ENCODE measurements at regions of chr7 and their contacts with region 1.

Region 1: GRCh38 chr7:3482147-3482964 is 181.3 kb downstream of the SDK1 start:
- DNase-seq: peak; percentile 68
- H3K4me3 Mint-ChIP-seq: no peak overlapping the region
- H3K27ac Mint-ChIP-seq: no peak overlapping the region
- H3K4me1 Mint-ChIP-seq: peaks cover 11% of the 10 kb centered on the region
- H3K27me3 Mint-ChIP-seq: no peaks in the 10 kb centered on the region
- CTCF ChIP-seq: peak; percentile 81

Region 2: GRCh38 chr7:3649250-3649649 is 166.9 kb after region 1 on chr7:
- CTCF ChIA-PET with region 1: interaction called, 3 read pairs
- intact Hi-C with region 1: loop called (anchors 10 kb)
- DNase-seq: peak; percentile 28
- H3K4me3 Mint-ChIP-seq: no peak overlapping the region
- H3K27ac Mint-ChIP-seq: no peak overlapping the region
- H3K4me1 Mint-ChIP-seq: no peaks in the 10 kb centered on the region
- H3K27me3 Mint-ChIP-seq: no peaks in the 10 kb centered on the region
- CTCF ChIP-seq: no peak

Region 3: GRCh38 chr7:3760651-3761050 is 278.3 kb after region 1 on chr7:
- CTCF ChIA-PET with region 1: interaction called, 3 read pairs
- intact Hi-C with region 1: loop called (anchors 10 kb)
- DNase-seq: no peak
- H3K4me3 Mint-ChIP-seq: peak overlapping the region; percentile 40
- H3K27ac Mint-ChIP-seq: peak overlapping the region; percentile 45
- H3K4me1 Mint-ChIP-seq: peaks cover 54% of the 10 kb centered on the region
- H3K27me3 Mint-ChIP-seq: no peaks in the 10 kb centered on the region
- CTCF ChIP-seq: no peak

Measured in Calu3 (cell line).